CD8-positive, alpha-beta memory T cell (primary cell): ENCODE measurements at regions of chr16 and their contacts with region 1.

Region 1: GRCh38 chr16:21565861-21566669 is 33.3 kb upstream of the METTL9 start:
- DNase-seq: peak in 1 of 5 donors; percentile 58
- H3K4me3 ChIP-seq: no peak overlapping the region
- H3K4me3 Mint-ChIP-seq: no peak overlapping the region
- H3K27ac ChIP-seq: no peak overlapping the region
- H3K27ac Mint-ChIP-seq: peak overlapping the region in 7 of 8 donors; percentile 38 to 89 (median 81)
- H3K4me1 ChIP-seq: peaks cover 3% of the 10 kb centered on the region
- H3K4me1 Mint-ChIP-seq: peaks cover 11 to 14% (median 11%) of the 10 kb centered on the region in 3 donors
- H3K27me3 ChIP-seq: no peaks in the 10 kb centered on the region
- H3K27me3 Mint-ChIP-seq: peaks cover under 1 to 13% of the 10 kb centered on the region in 2 donors

Region 2: GRCh38 chr16:21554795-21555585 is 11.1 kb before region 1 on chr16:
- CTCF ChIA-PET with region 1: interaction called, 4 read pairs
- POLR2A ChIA-PET with region 1: interaction called, 11 read pairs
- DNase-seq: peak; percentile 81 to 92 (median 87)
- H3K4me3 ChIP-seq: peak overlapping the region; percentile 56
- H3K4me3 Mint-ChIP-seq: peak overlapping the region; percentile 18 to 80 (median 78)
- H3K27ac ChIP-seq: no peak overlapping the region
- H3K27ac Mint-ChIP-seq: peak overlapping the region in 6 of 8 donors; percentile 0 to 83 (median 49)
- H3K4me1 ChIP-seq: peaks cover 9% of the 10 kb centered on the region
- H3K4me1 Mint-ChIP-seq: peaks cover 6 to 15% (median 7%) of the 10 kb centered on the region in 3 donors
- H3K27me3 ChIP-seq: no peaks in the 10 kb centered on the region
- H3K27me3 Mint-ChIP-seq: peaks cover 1 to 14% of the 10 kb centered on the region in 2 donors

Region 3: DNA sequence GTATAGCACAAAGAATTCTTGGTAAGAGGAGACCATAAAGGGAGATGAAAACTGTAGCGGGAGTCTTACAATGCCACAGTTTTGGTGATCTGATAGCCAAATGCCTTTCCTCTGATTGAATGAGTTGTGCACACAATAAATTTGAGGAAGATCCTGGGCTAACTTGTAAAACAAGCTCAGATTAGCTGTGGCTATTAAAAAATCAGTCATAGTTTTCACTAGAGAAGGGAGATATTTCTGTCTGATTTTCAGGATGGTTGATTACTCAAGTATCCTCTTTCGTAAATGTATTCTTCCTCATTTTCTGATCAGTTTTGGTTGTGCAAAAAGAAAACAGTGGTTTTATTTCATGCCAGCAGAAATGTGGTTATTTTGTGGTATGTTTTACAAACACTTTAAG is 24.2 kb after region 1 on chr16:
- CTCF ChIA-PET with region 1: no interaction called
- POLR2A ChIA-PET with region 1: no interaction called
- DNase-seq: no peak
- H3K4me3 ChIP-seq: no peak overlapping the region
- H3K4me3 Mint-ChIP-seq: no peak overlapping the region
- H3K27ac ChIP-seq: no peak overlapping the region
- H3K27ac Mint-ChIP-seq: no peak overlapping the region
- H3K4me1 ChIP-seq: no peaks in the 10 kb centered on the region
- H3K4me1 Mint-ChIP-seq: no peaks in the 10 kb centered on the region
- H3K27me3 ChIP-seq: no peaks in the 10 kb centered on the region
- H3K27me3 Mint-ChIP-seq: peaks cover 0 to 1% of the 10 kb centered on the region in 2 donors

Region 4: GRCh38 chr16:21646721-21647561 is 80.9 kb after region 1 on chr16:
- CTCF ChIA-PET with region 1: no interaction called
- POLR2A ChIA-PET with region 1: no interaction called
- DNase-seq: peak; percentile 42 to 85 (median 72)
- H3K4me3 ChIP-seq: peak overlapping the region; percentile 12
- H3K4me3 Mint-ChIP-seq: peak overlapping the region; percentile 68 to 82 (median 78)
- H3K27ac ChIP-seq: peak overlapping the region; percentile 26
- H3K27ac Mint-ChIP-seq: peak overlapping the region; percentile 85 to 98 (median 92)
- H3K4me1 ChIP-seq: peaks cover 57% of the 10 kb centered on the region
- H3K4me1 Mint-ChIP-seq: peaks cover 54 to 70% (median 60%) of the 10 kb centered on the region in 3 donors
- H3K27me3 ChIP-seq: no peaks in the 10 kb centered on the region
- H3K27me3 Mint-ChIP-seq: no peaks in the 10 kb centered on the region